ENCODE measurements at regions of chr9 and their contacts with region 1.

Region 1: GRCh38 chr9:25658571-25658970 is 19.7 kb downstream of the TUSC1 start:
- DNase-seq: no peak
- ATAC-seq: no peak

Region 2: DNA sequence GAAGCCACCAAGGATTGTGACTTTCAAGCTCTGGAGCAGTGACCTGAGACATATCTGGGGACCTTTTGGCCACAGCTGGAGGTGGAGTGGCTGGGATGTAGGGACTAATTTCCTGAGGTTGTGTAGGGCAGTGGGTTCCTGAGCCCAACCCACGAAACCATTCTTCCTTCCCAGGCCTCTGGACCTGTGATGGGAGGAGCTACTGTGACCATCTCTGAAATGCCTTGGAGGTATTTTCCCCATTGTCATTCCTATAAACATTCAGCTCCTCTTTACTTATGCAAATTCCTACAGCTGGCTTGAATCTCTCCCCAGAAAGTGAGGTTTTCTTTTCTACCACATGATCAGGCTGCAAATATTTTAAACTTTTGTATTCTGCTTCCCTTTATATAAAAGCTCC is 152.9 kb before region 1 on chr9:
- intact Hi-C with region 1: loop called in 1 of 2 experiments (anchors 10 kb)
- DNase-seq: no peak
- ATAC-seq: no peak

Region 3: DNA sequence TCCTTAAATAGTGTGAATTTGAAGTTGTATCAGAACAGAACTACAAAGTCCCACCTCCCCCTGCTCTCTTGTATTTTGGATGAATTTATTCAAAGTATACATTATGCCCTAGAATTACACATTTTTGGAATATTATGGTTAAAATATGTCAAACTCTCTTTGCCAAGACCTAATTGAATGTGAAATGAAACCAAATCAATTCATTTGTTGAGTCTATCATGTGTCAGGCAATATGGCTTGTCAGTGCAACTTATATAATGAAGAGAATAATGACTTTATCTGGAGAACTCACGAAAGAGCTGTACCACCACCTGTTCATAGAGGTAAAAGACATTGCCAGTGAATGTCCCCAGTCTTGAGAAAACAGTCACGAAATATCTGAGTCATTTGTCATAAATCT is 87.1 kb before region 1 on chr9:
- intact Hi-C with region 1: no loop called
- DNase-seq: no peak
- ATAC-seq: no peak

Region 4: GRCh38 chr9:25804856-25805255 is 146.3 kb after region 1 on chr9:
- intact Hi-C with region 1: no loop called
- DNase-seq: no peak
- ATAC-seq: no peak